Heart right ventricle (tissue), 16 donors: ENCODE measurements at regions of chr21 and their contacts with region 1.

Region 1: GRCh38 chr21:26572702-26573381 is at the start of gene CYYR1:
- DNase-seq: peak; percentile 22 to 33
- ATAC-seq: peak; percentile 48 to 83 (median 59)
- H3K4me3 ChIP-seq: peak within 1 kb of the TSS; percentile 33 to 68 (median 58)
- H3K27ac ChIP-seq: peak within 1 kb of the TSS; percentile 80 to 94 (median 84)
- H3K4me1 ChIP-seq: peaks cover 0 to 16% (median 0%) of the 10 kb centered on the region in 9 donors
- H3K27me3 ChIP-seq: peaks cover 6 to 24% (median 14%) of the 10 kb centered on the region in 7 donors
- CTCF ChIP-seq: no peak
- total RNA-seq, gene CYYR1: 10.8 to 26.4 (median 15.1) TPM

Region 2: GRCh38 chr21:26273686-26274313 is 299.0 kb before region 1 on chr21:
- intact Hi-C with region 1: no loop called
- DNase-seq: no peak
- ATAC-seq: no peak
- H3K4me3 ChIP-seq: no peak overlapping the region
- H3K27ac ChIP-seq: no peak overlapping the region
- H3K4me1 ChIP-seq: no peaks in the 10 kb centered on the region
- H3K27me3 ChIP-seq: no peaks in the 10 kb centered on the region
- CTCF ChIP-seq: no peak

Region 3: DNA sequence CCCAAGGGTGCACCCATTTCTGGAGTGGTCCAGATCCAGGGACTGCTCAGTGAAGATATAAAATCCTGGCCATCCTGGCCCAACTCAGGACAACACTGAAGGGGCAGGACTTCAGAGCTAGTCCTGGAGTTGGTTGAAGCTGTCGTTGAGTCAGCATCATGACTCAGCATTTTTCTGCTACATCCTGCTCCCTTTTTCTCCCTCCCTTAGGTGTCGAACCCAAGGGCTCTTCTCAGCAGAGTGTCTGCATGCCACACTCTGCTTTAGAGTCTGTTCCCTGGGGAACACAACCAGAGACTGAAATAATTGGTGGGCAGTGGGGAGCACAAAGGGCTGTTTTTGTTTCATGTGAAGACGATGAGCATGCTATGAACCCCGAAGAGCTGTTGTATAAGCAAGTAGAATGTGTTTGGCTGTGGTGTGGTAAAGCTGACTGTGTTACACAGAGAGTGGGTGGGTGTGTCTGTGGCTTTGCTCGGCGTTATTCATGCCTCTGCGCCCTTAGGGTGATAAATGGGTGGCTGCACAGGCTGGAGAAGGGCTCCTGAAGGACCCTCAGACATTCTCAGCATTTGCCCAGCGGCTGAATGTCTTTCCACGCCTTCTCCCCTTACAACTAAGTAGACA is 167.0 kb before region 1 on chr21:
- intact Hi-C with region 1: loop called in 1 of 10 experiments (anchors 10 kb)
- DNase-seq: no peak
- ATAC-seq: no peak
- H3K4me3 ChIP-seq: no peak overlapping the region
- H3K27ac ChIP-seq: no peak overlapping the region
- H3K4me1 ChIP-seq: peaks cover 0 to 20% (median 2%) of the 10 kb centered on the region in 9 donors
- H3K27me3 ChIP-seq: no peaks in the 10 kb centered on the region
- CTCF ChIP-seq: no peak

Region 4: GRCh38 chr21:26489781-26490180 is 83.1 kb before region 1 on chr21:
- intact Hi-C with region 1: loop called in 2 of 10 experiments (anchors 10 kb)
- DNase-seq: no peak
- ATAC-seq: no peak
- H3K4me3 ChIP-seq: no peak overlapping the region
- H3K27ac ChIP-seq: no peak overlapping the region
- H3K4me1 ChIP-seq: peaks cover 0 to 7% (median 0%) of the 10 kb centered on the region in 9 donors
- H3K27me3 ChIP-seq: no peaks in the 10 kb centered on the region
- CTCF ChIP-seq: no peak

Region 5: GRCh38 chr21:26528882-26529281 is 44.0 kb before region 1 on chr21:
- intact Hi-C with region 1: loop called in 1 of 10 experiments (anchors 5 kb)
- DNase-seq: no peak
- ATAC-seq: no peak
- H3K4me3 ChIP-seq: no peak overlapping the region
- H3K27ac ChIP-seq: no peak overlapping the region
- H3K4me1 ChIP-seq: peaks cover 0 to 13% (median 0%) of the 10 kb centered on the region in 9 donors
- H3K27me3 ChIP-seq: no peaks in the 10 kb centered on the region
- CTCF ChIP-seq: no peak

Region 6: DNA sequence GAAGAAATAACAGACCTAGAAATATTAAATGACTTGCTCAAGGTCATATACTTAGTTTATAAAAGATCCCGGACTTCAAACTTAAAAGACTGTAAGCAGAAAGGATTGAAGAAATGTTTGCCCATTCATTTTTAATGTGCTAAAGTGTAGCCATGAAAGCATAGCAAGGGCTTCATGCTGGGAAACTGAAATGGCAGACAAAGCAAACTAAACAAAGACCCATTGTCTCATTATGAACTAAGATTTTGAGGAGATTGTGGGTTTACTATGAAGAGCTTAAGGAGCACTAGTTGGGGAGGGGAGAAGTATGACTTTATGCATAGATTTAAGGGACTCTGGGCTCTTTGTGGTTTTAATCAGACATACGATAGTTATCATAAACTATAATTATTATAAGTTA is 246.1 kb after region 1 on chr21:
- intact Hi-C with region 1: no loop called
- DNase-seq: no peak
- ATAC-seq: no peak
- H3K4me3 ChIP-seq: no peak overlapping the region
- H3K27ac ChIP-seq: no peak overlapping the region
- H3K4me1 ChIP-seq: peaks cover 0 to 17% (median 9%) of the 10 kb centered on the region in 9 donors
- H3K27me3 ChIP-seq: no peaks in the 10 kb centered on the region
- CTCF ChIP-seq: no peak

Region 7: GRCh38 chr21:26832546-26832945 is 259.7 kb after region 1 on chr21:
- intact Hi-C with region 1: no loop called
- DNase-seq: no peak
- ATAC-seq: peak in 1 of 8 donors; percentile 9
- H3K4me3 ChIP-seq: no peak overlapping the region
- H3K27ac ChIP-seq: no peak overlapping the region
- H3K4me1 ChIP-seq: peaks cover 0 to 20% (median 6%) of the 10 kb centered on the region in 9 donors
- H3K27me3 ChIP-seq: no peaks in the 10 kb centered on the region
- CTCF ChIP-seq: no peak